GM23248 (cell line): ENCODE measurements at regions of chr10 and their contacts with region 1.

Region 1: GRCh38 chr10:44051584-44052385 is 333.1 kb downstream of the CXCL12 start:
- DNase-seq: peak; percentile 87
- H3K4me3 ChIP-seq: peak overlapping the region; percentile 7; the same call in 1 of the 2 replicates
- H3K27ac ChIP-seq: peak overlapping the region; percentile 26
- H3K4me1 ChIP-seq: peaks cover 18% of the 10 kb centered on the region
- H3K27me3 ChIP-seq: no peaks in the 10 kb centered on the region

Region 2: DNA sequence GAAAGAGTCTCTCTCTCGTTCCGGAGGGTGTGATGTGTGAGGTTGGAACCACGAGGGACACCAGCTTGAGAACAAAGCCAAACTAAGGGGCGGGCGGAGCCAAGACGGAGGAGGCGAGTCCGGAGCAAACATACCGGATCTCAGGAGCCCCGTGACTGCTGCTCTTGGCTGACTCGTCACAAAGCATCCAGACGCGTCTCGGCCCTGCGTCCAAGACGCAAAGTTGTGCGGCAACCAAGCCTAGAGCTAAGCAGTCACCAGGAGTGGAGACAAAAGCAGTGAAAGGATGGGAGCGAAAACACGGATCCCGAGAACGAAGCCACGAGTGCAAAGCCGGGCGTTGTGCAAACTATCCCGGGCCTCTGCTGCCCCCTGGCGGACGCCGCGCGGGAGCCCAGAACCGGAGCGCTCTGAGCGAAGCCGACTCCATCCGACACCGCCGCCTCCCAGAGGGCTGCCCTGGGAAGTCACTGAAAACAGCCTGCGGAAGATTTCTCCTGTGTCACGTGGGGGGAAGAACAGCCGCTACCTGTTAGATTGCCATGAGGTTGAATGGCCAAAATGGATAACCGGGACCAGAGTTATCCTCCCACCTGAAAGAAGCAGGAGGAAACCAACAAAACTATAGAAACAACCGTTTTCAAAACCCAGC is 813.0 kb after region 1 on chr10:
- in situ Hi-C with region 1: loop called (anchors 25 kb)
- DNase-seq: peak; percentile 93
- H3K4me3 ChIP-seq: peak overlapping the region; percentile 73
- H3K27ac ChIP-seq: peak overlapping the region; percentile 91
- H3K4me1 ChIP-seq: peaks cover 36% of the 10 kb centered on the region
- H3K27me3 ChIP-seq: no peaks in the 10 kb centered on the region